Activated naive CD4-positive, alpha-beta T cell treated with anti-CD3 and anti-CD28 coated beads for 36 hours (primary cell): ENCODE measurements at regions of chr6 and their contacts with region 1.

Region 1: DNA sequence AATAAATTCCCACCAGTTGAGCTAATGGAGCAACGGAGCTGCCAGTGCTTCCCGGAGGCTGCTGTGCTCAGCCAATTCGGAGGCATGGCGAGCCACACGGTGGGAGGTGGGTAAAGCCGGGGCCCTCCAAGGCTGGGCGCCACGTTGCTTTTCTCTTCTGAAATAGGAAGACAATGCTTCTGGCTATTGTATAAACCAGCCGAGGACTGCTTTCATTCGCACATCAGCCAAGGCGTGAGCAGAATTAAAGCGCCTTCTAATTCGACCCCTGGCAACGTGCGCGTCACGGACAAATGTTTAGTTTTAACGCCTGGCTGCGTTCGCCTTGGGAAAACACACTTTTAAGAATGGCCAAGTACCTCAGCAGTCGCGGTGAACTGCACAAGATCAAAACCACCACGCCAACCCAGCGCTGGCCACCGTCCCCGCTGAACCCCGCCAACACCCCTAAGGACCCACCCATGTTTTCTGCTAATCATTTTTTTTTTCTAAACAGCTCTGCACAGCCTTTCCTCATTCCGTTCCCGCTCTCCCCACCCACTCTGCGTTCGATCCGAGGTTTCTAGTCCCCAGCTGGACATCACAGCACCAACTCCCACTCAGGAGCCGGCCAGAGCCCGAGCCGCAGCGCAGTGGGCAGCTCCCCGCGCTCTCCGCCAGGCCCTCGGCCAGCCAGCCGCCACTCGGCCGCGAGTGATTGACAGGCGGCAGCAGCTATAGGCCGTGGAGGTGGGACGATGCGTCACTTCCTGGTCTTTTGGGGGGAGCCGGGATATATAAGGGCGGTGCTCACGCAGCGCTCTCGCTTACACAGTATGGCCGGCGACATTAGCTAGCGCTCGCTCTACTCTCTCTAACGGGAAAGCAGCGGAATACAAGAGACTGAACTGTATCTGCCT is at the start of gene AMD1:
- DNase-seq: peak; percentile 94
- H3K4me3 Mint-ChIP-seq: peak within 1 kb of the TSS; percentile 95
- H3K27ac Mint-ChIP-seq: peak within 1 kb of the TSS; percentile 95
- H3K4me1 Mint-ChIP-seq: peaks cover 29% of the 10 kb centered on the region
- H3K27me3 Mint-ChIP-seq: no peaks in the 10 kb centered on the region
- total RNA-seq, gene AMD1: 72.6 to 75.3 TPM

Region 2: DNA sequence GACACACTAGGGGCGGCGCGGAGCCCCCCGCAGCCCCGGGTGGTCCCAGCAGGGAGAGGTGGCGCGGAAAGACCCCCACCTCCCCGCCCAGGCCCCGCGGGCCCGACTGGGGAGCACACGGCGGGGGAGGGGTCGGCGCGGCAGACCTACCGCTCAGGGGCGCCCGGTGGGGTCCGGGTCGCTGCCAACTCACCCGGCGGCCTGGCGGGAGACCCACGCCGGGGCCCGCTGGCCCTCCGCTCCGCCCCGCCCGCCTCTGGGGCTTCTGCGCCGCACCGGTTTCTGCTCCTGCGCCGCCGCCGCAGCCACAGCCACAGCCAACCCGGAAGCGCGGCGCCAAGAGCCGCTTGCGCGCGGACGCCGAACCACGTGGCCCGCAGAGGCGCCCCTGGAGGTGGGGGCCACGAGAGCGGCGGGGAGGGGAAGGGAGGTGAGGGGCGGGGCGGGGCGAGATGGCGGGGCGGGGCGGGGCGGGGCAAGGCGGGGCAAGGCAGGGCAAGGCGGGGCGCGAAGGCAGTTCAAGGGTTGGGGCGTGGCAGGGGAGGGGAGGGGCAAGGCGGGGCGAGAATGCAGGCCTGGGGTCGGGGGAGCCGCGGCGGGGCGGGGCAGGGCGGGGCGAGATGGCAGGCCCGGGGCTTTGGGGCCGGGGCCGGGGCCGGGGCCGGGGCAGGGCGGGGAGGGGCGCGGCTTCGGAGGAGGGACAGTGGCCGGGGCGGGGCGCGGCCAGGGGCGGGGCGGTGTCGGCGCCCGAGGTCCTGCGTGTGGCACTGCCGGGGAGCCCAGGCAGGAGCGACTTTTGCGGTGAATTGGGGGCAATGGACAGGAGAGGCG is 1391.1 kb before region 1 on chr6 and contains the start of gene ZBTB24:
- CTCF ChIA-PET with region 1: no interaction called
- intact Hi-C with region 1: loop called (anchors 2 kb)
- DNase-seq: peak; percentile 88
- H3K4me3 Mint-ChIP-seq: peak within 1 kb of the TSS; percentile 85
- H3K27ac Mint-ChIP-seq: peak within 1 kb of the TSS; percentile 80
- H3K4me1 Mint-ChIP-seq: peaks cover 37% of the 10 kb centered on the region
- H3K27me3 Mint-ChIP-seq: no peaks in the 10 kb centered on the region
- total RNA-seq, gene ZBTB24: 6.9 to 7.4 TPM

Region 3: DNA sequence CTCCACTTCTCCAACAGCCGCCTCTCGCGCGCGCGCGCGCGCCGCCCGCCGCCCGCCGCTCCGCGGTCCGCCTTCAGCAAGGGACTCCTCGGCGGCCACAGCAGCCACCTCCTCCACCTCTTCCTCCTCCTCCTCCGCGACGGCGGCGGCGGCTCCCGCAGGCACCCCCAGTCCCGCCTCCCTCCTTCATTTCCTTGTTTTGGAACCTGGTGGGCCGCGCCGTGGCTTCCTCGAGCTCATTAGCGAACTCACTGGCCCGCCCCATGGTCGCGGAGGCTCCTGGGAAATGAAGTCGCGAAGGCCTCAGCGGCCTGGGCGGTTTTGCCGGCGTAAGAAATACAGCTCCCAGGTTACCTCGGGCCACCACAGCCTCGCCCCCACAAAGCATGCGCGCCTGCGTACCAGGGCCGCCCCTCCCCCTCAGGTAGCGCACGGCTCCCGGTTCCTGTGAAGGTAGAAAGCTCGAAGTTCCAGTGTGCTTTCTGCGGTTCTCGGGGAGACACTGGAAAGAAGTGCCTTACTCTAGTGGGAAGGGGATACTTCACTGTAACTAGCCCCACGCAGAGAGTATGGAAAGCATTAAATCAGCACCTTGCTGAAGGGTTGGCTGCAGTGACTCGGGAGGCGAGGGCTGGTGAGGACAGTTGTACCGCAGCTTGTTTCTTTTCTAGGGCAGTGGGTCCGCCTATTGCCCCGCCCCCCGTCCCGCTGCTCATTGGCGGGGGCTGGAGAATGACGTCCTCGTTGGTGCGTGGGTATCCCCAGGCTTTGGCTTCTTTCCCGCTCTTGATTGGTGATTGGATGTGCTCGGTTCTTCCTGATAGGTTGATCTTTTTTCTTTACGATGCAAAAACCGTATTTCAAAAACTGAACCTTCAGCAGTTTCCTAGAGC is 58.8 kb before region 1 on chr6 and contains the start of gene CDK19:
- CTCF ChIA-PET with region 1: interaction called, 14 read pairs
- intact Hi-C with region 1: loop called (anchors 1 kb)
- DNase-seq: peak; percentile 99
- H3K4me3 Mint-ChIP-seq: peak within 1 kb of the TSS; percentile 100
- H3K27ac Mint-ChIP-seq: peak within 1 kb of the TSS; percentile 95
- H3K4me1 Mint-ChIP-seq: peaks cover 19% of the 10 kb centered on the region
- H3K27me3 Mint-ChIP-seq: no peaks in the 10 kb centered on the region
- total RNA-seq, gene CDK19: 11.0 to 11.7 TPM

Region 4: GRCh38 chr6:110841266-110841665 is 33.0 kb before region 1 on chr6:
- CTCF ChIA-PET with region 1: no interaction called
- intact Hi-C with region 1: no loop called
- DNase-seq: no peak
- H3K4me3 Mint-ChIP-seq: no peak overlapping the region
- H3K27ac Mint-ChIP-seq: no peak overlapping the region
- H3K4me1 Mint-ChIP-seq: no peaks in the 10 kb centered on the region
- H3K27me3 Mint-ChIP-seq: no peaks in the 10 kb centered on the region

Region 5: DNA sequence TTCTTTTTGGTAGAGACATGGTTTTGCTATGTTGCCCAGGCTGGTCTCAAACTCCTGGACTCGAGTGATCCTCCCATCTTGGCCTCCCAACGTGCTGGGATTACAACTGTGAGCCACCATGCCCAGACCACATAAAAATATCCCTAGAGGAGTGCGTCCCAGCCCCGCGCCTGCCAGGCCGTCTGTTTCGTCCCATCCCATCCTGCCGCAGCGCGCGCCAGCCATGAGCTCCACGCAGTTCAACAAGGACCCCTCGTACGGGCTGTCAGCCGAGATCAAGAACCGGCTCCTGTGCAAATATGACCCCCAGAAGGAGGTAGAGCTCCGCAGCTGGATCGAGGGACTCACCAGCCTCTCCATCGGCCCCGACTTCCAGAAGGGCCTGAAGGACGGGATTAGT is 16.2 kb before region 1 on chr6:
- CTCF ChIA-PET with region 1: no interaction called
- intact Hi-C with region 1: no loop called
- DNase-seq: no peak
- H3K4me3 Mint-ChIP-seq: no peak overlapping the region
- H3K27ac Mint-ChIP-seq: no peak overlapping the region
- H3K4me1 Mint-ChIP-seq: peaks cover 9% of the 10 kb centered on the region
- H3K27me3 Mint-ChIP-seq: no peaks in the 10 kb centered on the region

Region 6: DNA sequence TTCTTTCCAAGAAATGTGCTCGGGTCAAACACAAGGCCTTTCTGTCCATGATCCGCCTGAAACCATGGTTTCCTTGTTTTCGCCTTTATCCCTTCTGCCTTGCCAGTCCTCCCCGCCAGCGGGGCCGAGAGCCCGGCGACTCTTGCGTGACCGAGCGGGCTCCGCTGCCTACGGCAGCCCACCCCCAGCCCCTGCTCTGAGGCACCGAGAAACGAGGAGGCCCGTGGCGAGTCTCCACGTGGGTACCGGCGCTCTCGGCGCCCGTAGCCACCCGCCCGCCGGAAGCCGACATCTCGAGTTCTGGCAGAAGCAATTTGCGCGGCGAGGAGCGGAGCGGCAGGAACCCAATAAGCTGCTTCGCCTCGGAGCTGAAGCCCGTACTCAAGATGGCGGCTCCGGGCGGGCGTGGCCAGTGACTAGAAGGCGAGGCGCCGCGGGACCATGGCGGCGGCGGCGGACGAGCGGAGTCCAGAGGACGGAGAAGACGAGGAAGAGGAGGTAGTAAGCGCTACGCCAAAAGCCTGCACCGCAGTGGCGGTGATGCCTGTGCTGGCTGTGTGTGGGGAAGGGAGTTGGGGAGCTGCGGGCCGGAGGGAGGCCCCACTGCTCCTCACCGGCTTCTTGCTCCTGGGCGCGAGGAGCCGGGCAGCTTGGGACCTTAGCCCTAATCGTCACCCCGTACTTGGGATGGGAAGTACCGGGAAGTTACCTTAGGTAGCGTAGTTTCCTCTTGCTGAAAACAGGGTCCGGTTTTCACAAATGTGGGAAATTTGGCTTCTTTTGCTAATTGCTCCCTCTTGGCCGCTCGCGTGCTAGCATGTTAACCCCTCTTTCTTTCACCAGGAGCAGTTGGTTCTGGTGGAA is 84.3 kb after region 1 on chr6 and contains the start of gene GTF3C6:
- CTCF ChIA-PET with region 1: no interaction called
- intact Hi-C with region 1: loop called (anchors 1 kb)
- DNase-seq: peak; percentile 94
- H3K4me3 Mint-ChIP-seq: peak within 1 kb of the TSS; percentile 94
- H3K27ac Mint-ChIP-seq: peak within 1 kb of the TSS; percentile 96
- H3K4me1 Mint-ChIP-seq: peaks cover 14% of the 10 kb centered on the region
- H3K27me3 Mint-ChIP-seq: no peaks in the 10 kb centered on the region
- total RNA-seq, gene GTF3C6: 81.6 to 84.7 TPM

Region 7: DNA sequence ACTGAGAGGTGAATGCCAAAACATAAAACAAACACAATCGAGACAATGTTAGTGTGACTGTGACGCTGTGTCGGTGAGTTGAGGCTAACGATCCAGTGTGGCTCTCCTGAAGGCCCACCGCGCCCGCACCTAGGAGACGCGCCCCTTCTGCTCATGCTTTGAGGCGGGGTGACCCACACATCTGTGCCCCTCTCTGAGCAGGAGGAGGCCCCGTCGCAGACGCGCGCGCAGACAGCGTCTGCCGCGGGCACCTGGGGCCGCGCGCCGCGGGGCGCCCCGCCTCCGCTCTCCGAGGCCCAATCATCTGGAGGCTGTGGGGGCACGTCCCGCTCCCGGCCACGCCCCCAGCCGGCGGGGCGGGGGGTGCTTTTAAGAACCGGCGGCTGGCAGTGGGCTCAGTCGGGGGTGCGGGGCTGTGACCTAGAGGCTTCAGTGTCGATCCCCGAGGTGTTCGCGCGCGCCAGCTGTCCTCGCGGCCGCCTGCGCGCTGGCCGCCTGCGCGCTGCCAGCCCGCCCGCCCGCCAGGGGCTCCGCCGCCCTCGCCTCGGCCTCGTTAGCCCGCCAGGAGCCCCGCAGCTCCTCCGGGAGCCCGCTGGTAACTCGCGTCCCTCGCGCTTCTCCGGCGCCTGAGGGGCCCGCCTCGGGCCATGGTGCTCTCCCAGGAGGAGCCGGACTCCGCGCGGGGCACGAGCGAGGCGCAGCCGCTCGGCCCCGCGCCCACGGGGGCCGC is 213.0 kb after region 1 on chr6 and contains the start of gene SLC16A10:
- CTCF ChIA-PET with region 1: no interaction called
- intact Hi-C with region 1: loop called (anchors 5 kb)
- DNase-seq: peak; percentile 74
- H3K4me3 Mint-ChIP-seq: peak within 1 kb of the TSS; percentile 89
- H3K27ac Mint-ChIP-seq: peak within 1 kb of the TSS; percentile 76
- H3K4me1 Mint-ChIP-seq: peaks cover 36% of the 10 kb centered on the region
- H3K27me3 Mint-ChIP-seq: no peaks in the 10 kb centered on the region
- total RNA-seq, gene SLC16A10: 6.6 to 8.1 TPM

Region 8: GRCh38 chr6:111113336-111114086 is 239.3 kb after region 1 on chr6:
- CTCF ChIA-PET with region 1: no interaction called
- intact Hi-C with region 1: no loop called
- DNase-seq: peak; percentile 82
- H3K4me3 Mint-ChIP-seq: peak overlapping the region; percentile 65
- H3K27ac Mint-ChIP-seq: peak overlapping the region; percentile 92
- H3K4me1 Mint-ChIP-seq: peaks cover 34% of the 10 kb centered on the region
- H3K27me3 Mint-ChIP-seq: no peaks in the 10 kb centered on the region

Region 9: DNA sequence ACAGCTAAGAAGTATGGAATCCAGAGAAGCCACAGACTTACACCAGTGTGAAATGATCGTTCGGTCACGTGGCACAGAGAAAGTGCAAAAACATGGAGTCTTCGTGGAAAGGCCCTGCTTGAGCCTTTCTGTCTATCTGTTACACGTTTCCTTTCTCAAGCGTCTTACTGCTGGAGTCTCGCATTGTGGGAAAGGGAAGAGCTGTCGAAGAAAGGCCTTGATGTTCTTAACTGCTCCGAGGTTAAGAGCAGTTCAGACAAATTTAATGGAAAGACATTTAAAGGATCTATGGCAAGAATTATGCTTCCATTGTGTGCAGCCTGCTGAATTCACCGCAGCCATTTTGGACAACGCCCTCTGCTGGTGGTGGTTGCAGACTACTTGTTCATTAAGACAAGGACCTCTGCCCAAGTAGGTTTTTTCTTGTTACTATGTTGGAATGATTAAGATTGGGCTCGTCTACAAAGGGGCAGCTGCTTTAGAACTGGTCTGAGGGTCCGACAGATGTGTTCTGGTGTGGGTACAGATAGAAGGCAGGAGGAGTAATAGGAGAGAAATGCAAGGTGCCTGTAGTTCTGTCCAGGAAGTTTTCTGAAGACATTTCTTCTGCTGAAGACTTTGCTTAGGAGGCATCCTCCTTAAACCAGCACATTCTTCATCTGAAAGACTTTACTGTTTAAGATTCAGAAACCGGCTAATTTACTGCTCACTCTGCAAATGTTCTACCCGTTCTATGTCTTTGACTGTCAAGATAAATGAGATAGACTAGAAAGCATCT is 1155.0 kb after region 1 on chr6:
- CTCF ChIA-PET with region 1: no interaction called
- intact Hi-C with region 1: loop called (anchors 5 kb)
- DNase-seq: peak; percentile 91
- H3K4me3 Mint-ChIP-seq: no peak overlapping the region
- H3K27ac Mint-ChIP-seq: peak overlapping the region; percentile 90
- H3K4me1 Mint-ChIP-seq: peaks cover 81% of the 10 kb centered on the region
- H3K27me3 Mint-ChIP-seq: no peaks in the 10 kb centered on the region